Heart right ventricle (tissue), 16 donors: ENCODE measurements at regions of chr16 and their contacts with region 1.

Region 1: DNA sequence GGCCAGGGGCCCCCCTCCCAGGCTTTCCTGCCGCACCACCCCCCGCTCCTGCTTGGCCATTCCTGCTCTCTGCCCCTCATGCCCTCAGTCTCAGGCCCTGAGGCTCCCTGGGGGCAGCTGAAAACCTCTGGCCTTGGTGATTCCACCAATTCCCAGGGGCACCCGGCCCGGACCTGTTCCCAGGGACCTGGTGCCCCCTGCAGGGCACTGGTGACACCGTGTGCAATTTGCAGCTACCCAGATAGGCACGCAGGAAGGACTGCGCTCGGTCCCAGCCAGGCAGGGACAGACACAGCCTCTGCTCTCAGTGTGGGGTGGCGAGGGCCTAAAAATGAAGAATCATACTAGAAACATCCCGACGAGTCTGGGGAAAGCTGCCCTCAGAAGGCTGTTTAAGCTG is 13.4 kb downstream of the WFDC1 start:
- DNase-seq: peak; percentile 34 to 57
- ATAC-seq: peak; percentile 58 to 84 (median 75)
- H3K4me3 ChIP-seq: no peak overlapping the region
- H3K27ac ChIP-seq: no peak overlapping the region
- H3K4me1 ChIP-seq: peaks cover 0 to 11% (median 5%) of the 10 kb centered on the region in 9 donors
- H3K27me3 ChIP-seq: peaks cover 0 to 59% (median 27%) of the 10 kb centered on the region in 7 donors
- CTCF ChIP-seq: peak; percentile 27 to 65 (median 51)

Region 2: DNA sequence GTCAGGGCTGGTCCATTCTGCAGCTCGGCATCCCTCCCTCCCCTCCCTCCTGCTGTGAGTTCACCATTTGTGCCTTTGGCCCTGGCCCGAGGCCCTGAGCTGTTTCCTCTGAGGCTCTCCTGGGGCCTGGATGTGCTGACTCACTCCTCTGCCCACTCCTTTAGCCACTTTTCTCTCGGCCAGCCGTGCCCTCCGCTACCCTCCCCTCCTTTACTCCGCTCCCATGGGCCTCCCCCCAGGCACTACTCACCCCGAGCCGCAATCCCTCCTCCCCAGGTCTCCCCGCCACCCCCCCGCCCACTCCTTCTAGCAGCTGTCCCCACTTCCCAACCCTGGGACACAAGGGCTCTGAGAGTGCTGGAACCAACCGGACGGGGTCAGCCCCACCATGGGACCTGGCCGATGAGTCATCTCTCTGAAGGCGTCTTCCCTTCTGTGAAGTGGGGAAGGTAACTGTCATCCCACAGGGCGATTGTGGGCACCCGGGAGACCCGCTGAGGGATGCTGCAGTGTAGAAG is 79.7 kb before region 1 on chr16:
- intact Hi-C with region 1: loop called in 1 of 10 experiments (anchors 5 kb)
- DNase-seq: peak; percentile 77 to 80
- ATAC-seq: peak; percentile 89 to 94 (median 93)
- H3K4me3 ChIP-seq: no peak overlapping the region
- H3K27ac ChIP-seq: peak overlapping the region in 3 of 10 donors; percentile 21 to 47 (median 26)
- H3K4me1 ChIP-seq: peaks cover 0 to 21% (median 11%) of the 10 kb centered on the region in 9 donors
- H3K27me3 ChIP-seq: peaks cover 0 to 7% (median 0%) of the 10 kb centered on the region in 7 donors
- CTCF ChIP-seq: no peak

Region 3: GRCh38 chr16:84239141-84239769 is 68.9 kb before region 1 on chr16:
- intact Hi-C with region 1: no loop called
- DNase-seq: no peak
- ATAC-seq: no peak
- H3K4me3 ChIP-seq: no peak overlapping the region
- H3K27ac ChIP-seq: no peak overlapping the region
- H3K4me1 ChIP-seq: peaks cover 0 to 18% (median 2%) of the 10 kb centered on the region in 9 donors
- H3K27me3 ChIP-seq: peaks cover 0 to 53% (median 30%) of the 10 kb centered on the region in 7 donors
- CTCF ChIP-seq: no peak

Region 4: GRCh38 chr16:84277237-84277823 is 30.8 kb before region 1 on chr16:
- intact Hi-C with region 1: loop called in 2 of 10 experiments (anchors 2 to 5 kb)
- DNase-seq: peak; percentile 57 to 76
- ATAC-seq: peak in 6 of 8 donors; percentile 57 to 76 (median 70)
- H3K4me3 ChIP-seq: no peak overlapping the region
- H3K27ac ChIP-seq: no peak overlapping the region
- H3K4me1 ChIP-seq: no peaks in the 10 kb centered on the region
- H3K27me3 ChIP-seq: peaks cover 0 to 25% (median 0%) of the 10 kb centered on the region in 7 donors
- CTCF ChIP-seq: peak; percentile 78 to 94 (median 88)